ENCODE measurements at regions of chr9 and their contacts with region 1.

Region 1: GRCh38 chr9:1604942-1605560 is 410.1 kb upstream of the SMARCA2 start:
- DNase-seq: no peak
- ATAC-seq: no peak

Region 2: DNA sequence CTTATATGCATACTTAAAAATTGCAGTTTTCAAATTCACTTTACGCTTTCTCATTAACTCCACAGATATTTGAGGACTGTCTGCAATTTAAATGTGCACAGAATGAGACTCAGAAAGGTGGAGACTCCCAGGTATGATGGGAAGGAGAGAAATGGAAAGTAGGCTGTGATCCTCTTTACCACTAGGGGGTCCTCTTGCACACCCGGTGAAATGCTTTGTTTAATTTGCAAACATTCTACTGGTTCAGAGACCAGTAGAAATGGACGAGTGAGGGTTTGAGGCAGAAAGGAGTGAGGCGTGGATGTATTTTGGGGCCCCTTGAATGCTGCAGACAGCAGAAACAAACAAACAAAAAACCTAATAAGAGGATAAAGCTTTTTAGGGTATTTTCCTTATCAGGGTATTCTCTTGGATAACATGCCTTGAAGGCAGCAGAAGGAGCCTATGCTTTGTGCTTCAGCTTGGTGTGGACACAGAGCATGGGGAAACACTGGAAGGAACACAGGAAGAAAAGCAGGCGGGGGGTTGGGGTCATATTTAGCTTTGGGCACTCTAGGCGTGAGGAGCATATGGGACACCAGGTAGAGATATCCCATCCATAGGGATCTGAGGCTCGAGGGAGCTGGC is 144.8 kb before region 1 on chr9:
- intact Hi-C with region 1: loop called in 1 of 2 experiments (anchors 10 kb)
- DNase-seq: no peak
- ATAC-seq: no peak

Region 3: GRCh38 chr9:2281031-2281802 is 676.2 kb after region 1 on chr9:
- intact Hi-C with region 1: no loop called
- DNase-seq: no peak
- ATAC-seq: no peak

Measured in left cardiac atrium (tissue), 4 donors.